Caco-2 (cell line): ENCODE measurements at regions of chr1 and their contacts with region 1.

Region 1: DNA sequence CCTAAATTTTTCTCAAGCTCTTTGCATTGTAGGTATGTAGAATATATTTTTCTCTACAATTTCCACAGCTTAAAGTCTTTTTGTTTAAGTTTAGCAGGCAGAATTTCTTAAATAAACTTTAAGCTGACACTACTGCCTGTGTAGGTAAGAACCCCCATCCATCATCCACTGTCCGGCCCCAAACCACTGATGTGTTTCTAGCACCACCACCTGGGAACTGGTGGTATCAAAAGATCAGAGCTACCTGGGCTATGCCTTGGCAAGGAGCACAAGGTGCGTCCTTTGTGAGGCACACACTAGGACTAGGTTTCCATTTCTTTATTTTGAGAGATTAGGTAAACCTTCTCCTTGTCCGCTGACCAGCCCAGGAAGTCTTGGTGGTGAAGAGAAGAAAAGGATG is 10.5 kb upstream of the LELP1 start:
- DNase-seq: peak; percentile 46 to 57
- H3K4me3 ChIP-seq: no peak overlapping the region
- H3K4me3 Mint-ChIP-seq: no peak overlapping the region
- H3K27ac Mint-ChIP-seq: no peak overlapping the region
- H3K4me1 ChIP-seq: no peaks in the 10 kb centered on the region
- H3K4me1 Mint-ChIP-seq: no peaks in the 10 kb centered on the region
- H3K27me3 ChIP-seq: no peaks in the 10 kb centered on the region; the same call in 1 of the 2 replicates
- H3K27me3 Mint-ChIP-seq: peaks cover 23% of the 10 kb centered on the region
- CTCF ChIP-seq: peak in 1 of 2 experiments; percentile 65

Region 2: GRCh38 chr1:152917794-152918193 is 274.9 kb before region 1 on chr1:
- CTCF ChIA-PET with region 1: interaction called, 10 read pairs
- POLR2A ChIA-PET with region 1: no interaction called
- intact Hi-C with region 1: loop called (anchors 1 kb)
- DNase-seq: peak in 1 of 2 experiments; percentile 23
- H3K4me3 ChIP-seq: no peak overlapping the region
- H3K4me3 Mint-ChIP-seq: no peak overlapping the region
- H3K27ac Mint-ChIP-seq: no peak overlapping the region
- H3K4me1 ChIP-seq: no peaks in the 10 kb centered on the region
- H3K4me1 Mint-ChIP-seq: no peaks in the 10 kb centered on the region
- H3K27me3 ChIP-seq: no peaks in the 10 kb centered on the region
- H3K27me3 Mint-ChIP-seq: peaks cover 26% of the 10 kb centered on the region
- CTCF ChIP-seq: peak; percentile 27 to 53

Region 3: DNA sequence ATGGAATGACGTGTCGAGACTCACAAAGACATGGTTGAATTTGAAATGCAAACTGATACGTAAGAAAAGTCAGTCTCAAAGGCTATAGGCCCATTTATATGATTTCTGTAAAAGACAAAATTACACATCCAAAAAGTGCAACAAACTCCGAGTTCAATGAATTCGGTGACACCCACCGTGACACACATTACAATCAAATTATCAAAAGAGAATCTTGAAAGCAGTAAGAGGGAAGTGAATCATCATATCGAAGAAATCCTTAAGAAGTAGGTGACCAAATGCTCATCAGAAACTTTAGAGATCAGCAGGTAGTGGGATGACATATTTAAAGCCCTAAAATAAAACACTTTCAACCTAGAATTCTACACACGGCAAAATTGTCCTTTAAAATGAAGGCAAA is 93.1 kb before region 1 on chr1:
- CTCF ChIA-PET with region 1: no interaction called
- POLR2A ChIA-PET with region 1: no interaction called
- intact Hi-C with region 1: loop called (anchors 10 kb)
- DNase-seq: no peak
- H3K4me3 ChIP-seq: no peak overlapping the region
- H3K4me3 Mint-ChIP-seq: no peak overlapping the region
- H3K27ac Mint-ChIP-seq: no peak overlapping the region
- H3K4me1 ChIP-seq: no peaks in the 10 kb centered on the region
- H3K4me1 Mint-ChIP-seq: no peaks in the 10 kb centered on the region
- H3K27me3 ChIP-seq: no peaks in the 10 kb centered on the region
- H3K27me3 Mint-ChIP-seq: peaks cover 22% of the 10 kb centered on the region
- CTCF ChIP-seq: no peak

Region 4: GRCh38 chr1:153113416-153113815 is 79.3 kb before region 1 on chr1 and contains the start of gene SPRR2F:
- CTCF ChIA-PET with region 1: no interaction called
- POLR2A ChIA-PET with region 1: no interaction called
- intact Hi-C with region 1: no loop called
- DNase-seq: no peak
- H3K4me3 ChIP-seq: no peak within 1 kb of the TSS
- H3K4me3 Mint-ChIP-seq: no peak within 1 kb of the TSS
- H3K27ac Mint-ChIP-seq: no peak within 1 kb of the TSS
- H3K4me1 ChIP-seq: no peaks in the 10 kb centered on the region
- H3K4me1 Mint-ChIP-seq: no peaks in the 10 kb centered on the region
- H3K27me3 ChIP-seq: no peaks in the 10 kb centered on the region
- H3K27me3 Mint-ChIP-seq: peaks cover 8% of the 10 kb centered on the region
- CTCF ChIP-seq: no peak
- total RNA-seq, gene SPRR2F: not detected in 2 replicates

Region 5: GRCh38 chr1:153220606-153221303 is 28.1 kb after region 1 on chr1:
- CTCF ChIA-PET with region 1: no interaction called
- POLR2A ChIA-PET with region 1: no interaction called
- intact Hi-C with region 1: loop called (anchors 1 kb)
- DNase-seq: no peak
- H3K4me3 ChIP-seq: no peak overlapping the region
- H3K4me3 Mint-ChIP-seq: no peak overlapping the region
- H3K27ac Mint-ChIP-seq: no peak overlapping the region
- H3K4me1 ChIP-seq: no peaks in the 10 kb centered on the region
- H3K4me1 Mint-ChIP-seq: no peaks in the 10 kb centered on the region
- H3K27me3 ChIP-seq: no peaks in the 10 kb centered on the region; the same call in 1 of the 2 replicates
- H3K27me3 Mint-ChIP-seq: peaks cover 26% of the 10 kb centered on the region
- CTCF ChIP-seq: no peak